HEK293 (cell line): ENCODE measurements at regions of chr4 and their contacts with region 1.

Region 1: GRCh38 chr4:185640811-185641675 is 105.7 kb upstream of the PDLIM3 start:
- H3K4me3 ChIP-seq: no peak overlapping the region
- H3K27ac ChIP-seq: no peak overlapping the region
- H3K4me1 ChIP-seq: no peaks in the 10 kb centered on the region
- CTCF ChIP-seq: no peak

Region 2: DNA sequence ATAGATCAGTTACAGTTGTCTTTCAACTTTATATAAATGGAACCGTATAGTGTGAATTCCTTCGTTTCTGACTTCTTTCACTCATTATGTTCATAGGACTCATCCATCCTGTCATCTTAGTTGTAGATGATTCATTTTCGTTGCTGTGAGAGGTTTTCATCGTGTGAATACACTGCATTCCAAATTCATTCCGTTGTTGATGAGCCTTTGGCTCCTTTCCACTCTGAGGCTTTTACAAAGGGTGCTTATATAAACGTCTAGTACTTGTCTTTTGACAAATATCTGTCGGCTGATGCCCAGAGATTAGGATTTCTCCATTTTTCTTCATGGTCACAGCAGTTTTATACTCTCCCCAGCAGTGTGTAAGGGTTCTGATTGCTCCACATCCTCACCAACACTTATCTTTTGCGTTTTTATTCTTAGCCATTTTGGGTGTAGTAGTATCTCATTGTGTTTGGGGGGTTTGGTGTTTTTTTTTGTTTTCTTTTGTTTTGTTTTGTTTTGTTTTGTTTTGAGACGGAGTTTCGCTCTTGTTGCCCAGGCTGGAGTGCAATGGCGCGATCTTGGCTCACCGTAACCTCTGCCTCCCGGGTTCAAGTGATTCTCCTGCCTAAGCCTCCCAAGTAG is 294.0 kb before region 1 on chr4:
- CTCF ChIA-PET with region 1: no interaction called
- POLR2A ChIA-PET with region 1: no interaction called
- H3K4me3 ChIP-seq: no peak overlapping the region
- H3K27ac ChIP-seq: no peak overlapping the region
- H3K4me1 ChIP-seq: no peaks in the 10 kb centered on the region
- CTCF ChIP-seq: no peak

Region 3: GRCh38 chr4:185965426-185966384 is 324.7 kb after region 1 on chr4:
- CTCF ChIA-PET with region 1: no interaction called
- POLR2A ChIA-PET with region 1: no interaction called
- H3K4me3 ChIP-seq: no peak overlapping the region
- H3K27ac ChIP-seq: no peak overlapping the region
- H3K4me1 ChIP-seq: no peaks in the 10 kb centered on the region
- CTCF ChIP-seq: no peak

Region 4: GRCh38 chr4:186021461-186022167 is 380.6 kb after region 1 on chr4:
- CTCF ChIA-PET with region 1: interaction called, 44 read pairs
- POLR2A ChIA-PET with region 1: no interaction called
- H3K4me3 ChIP-seq: no peak overlapping the region
- H3K27ac ChIP-seq: no peak overlapping the region
- H3K4me1 ChIP-seq: no peaks in the 10 kb centered on the region
- CTCF ChIP-seq: peak; percentile 79